ENCODE measurements at regions of chr9 and their contacts with region 1.

Region 1: GRCh38 chr9:82037126-82037525 is 48.6 kb downstream of the SPATA31D1 start:
- H3K4me3 ChIP-seq: no peak overlapping the region
- H3K27ac ChIP-seq: no peak overlapping the region
- H3K4me1 ChIP-seq: no peaks in the 10 kb centered on the region
- CTCF ChIP-seq: no peak

Region 2: DNA sequence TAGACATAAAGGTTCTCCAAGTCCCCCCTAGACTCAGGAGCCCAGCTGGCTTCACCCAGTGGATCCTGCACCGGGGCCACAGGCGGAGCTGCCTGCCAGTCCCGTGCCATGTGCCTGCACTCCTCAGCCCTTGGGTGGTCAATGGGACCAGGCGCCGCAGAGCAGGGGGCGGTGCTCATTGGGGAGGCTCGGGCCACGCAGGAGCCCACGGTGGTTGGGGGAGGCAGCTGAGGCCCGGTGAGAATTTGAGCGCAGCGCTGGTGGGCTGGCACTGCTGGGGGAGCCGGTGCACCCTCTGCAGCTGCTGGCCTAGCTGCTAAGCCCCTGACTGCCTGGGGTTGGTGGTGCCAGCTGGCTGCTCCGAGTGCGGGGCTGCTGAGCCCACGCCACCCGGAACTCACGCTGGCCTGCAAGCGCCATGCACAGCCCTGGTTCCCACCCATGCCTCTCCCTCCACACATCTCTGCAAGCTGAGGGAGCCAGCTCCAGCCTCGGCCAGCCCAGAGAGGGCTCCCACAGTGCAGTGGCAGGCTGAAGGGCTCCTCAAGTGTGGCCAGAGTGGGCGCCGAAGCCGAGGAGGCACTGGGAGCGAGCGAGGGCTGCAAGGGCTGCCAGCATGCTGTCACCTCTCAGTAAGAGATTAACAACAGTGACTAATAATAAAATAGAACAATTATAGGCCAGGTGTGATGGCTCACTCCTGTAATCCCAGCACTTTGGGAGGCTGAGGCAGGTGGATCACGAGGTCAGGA is 17.3 kb after region 1 on chr9:
- CTCF ChIA-PET with region 1: no interaction called
- POLR2A ChIA-PET with region 1: interaction called, 10 read pairs
- H3K4me3 ChIP-seq: no peak overlapping the region
- H3K27ac ChIP-seq: no peak overlapping the region
- H3K4me1 ChIP-seq: no peaks in the 10 kb centered on the region
- CTCF ChIP-seq: no peak

Region 3: DNA sequence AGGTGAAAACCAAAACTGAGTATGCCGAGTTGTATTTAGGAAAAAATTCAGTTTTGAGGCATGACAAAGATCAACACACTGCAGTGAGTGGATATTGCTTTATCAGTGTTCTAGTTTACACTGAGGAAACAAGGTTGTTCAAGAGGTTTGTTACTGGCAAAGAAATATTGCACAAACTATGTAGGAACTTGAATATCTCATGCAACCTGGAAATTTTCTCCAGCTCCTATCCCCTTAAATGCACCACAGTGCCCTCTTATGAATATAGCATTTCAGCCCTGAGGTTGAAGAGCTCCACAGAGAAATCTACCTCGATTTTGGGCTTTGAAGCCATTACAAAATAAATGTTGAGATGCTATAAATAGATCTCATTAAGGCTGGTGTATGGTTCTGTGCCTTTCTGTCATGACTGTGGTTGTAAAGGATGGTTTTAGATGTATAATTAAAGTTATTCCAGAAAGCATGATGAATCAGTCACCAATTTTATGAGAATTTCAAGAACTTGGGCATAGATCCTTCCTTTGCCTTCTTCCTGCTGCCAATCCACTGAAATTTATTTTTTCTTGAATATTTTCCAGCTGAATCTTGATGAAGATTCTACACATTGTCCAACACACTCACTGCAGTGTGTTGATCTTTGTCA is 110.8 kb after region 1 on chr9:
- CTCF ChIA-PET with region 1: no interaction called
- POLR2A ChIA-PET with region 1: no interaction called
- H3K4me3 ChIP-seq: no peak overlapping the region
- H3K27ac ChIP-seq: no peak overlapping the region
- H3K4me1 ChIP-seq: peaks cover 8% of the 10 kb centered on the region
- CTCF ChIP-seq: no peak